Activated CD4-positive, alpha-beta memory T cell treated with anti-CD3 and anti-CD28 coated beads for 36 hours (primary cell): ENCODE measurements at regions of chr13 and their contacts with region 1.

Region 1: GRCh38 chr13:114065141-114065925 is 67.1 kb downstream of the RASA3 start:
- DNase-seq: peak; percentile 90
- H3K4me3 Mint-ChIP-seq: peak overlapping the region; percentile 70
- H3K27ac Mint-ChIP-seq: peak overlapping the region; percentile 96
- H3K4me1 Mint-ChIP-seq: peaks cover 65% of the 10 kb centered on the region
- H3K27me3 Mint-ChIP-seq: no peaks in the 10 kb centered on the region

Region 2: DNA sequence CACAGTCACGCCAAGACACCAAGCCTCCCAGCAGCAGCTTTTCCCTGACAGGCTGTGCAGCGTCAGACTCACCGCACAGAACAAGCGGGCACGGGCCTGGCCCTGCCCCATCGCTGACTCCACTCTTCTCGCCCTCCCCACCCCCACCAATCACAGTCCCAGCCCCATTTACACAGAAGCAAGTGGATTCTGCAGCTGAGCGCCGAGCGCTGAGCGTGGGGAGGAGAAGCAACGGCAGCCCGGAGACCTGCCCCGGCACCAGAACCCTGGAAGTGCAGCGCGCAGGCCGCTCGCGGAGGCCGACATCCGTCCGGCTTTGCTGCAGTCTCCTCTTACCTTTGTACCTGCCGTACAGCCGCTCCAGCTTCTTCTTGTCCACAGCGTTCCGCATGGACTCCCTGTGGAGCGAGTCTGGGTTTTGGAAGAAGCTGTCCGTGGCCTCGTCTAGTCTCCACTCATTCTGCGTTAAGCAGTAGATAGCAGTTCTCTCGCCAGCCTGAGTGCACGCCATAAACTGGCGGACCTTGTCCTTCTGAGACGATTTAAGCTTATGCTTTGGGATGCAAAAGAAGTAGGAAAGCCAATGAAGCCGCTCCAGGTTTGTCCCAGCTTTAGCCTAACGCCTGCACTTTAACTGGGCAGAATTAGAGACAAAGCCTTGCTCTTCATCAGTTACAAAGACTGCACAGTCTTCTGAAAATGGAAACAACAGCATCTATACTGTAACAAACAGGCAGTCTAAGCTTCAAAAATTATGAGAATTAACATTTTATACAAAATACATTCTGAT is 581.6 kb before region 1 on chr13:
- CTCF ChIA-PET with region 1: no interaction called
- POLR2A ChIA-PET with region 1: no interaction called
- intact Hi-C with region 1: no loop called
- DNase-seq: no peak
- H3K4me3 Mint-ChIP-seq: no peak overlapping the region
- H3K27ac Mint-ChIP-seq: no peak overlapping the region
- H3K4me1 Mint-ChIP-seq: peaks cover 15% of the 10 kb centered on the region
- H3K27me3 Mint-ChIP-seq: no peaks in the 10 kb centered on the region

Region 3: DNA sequence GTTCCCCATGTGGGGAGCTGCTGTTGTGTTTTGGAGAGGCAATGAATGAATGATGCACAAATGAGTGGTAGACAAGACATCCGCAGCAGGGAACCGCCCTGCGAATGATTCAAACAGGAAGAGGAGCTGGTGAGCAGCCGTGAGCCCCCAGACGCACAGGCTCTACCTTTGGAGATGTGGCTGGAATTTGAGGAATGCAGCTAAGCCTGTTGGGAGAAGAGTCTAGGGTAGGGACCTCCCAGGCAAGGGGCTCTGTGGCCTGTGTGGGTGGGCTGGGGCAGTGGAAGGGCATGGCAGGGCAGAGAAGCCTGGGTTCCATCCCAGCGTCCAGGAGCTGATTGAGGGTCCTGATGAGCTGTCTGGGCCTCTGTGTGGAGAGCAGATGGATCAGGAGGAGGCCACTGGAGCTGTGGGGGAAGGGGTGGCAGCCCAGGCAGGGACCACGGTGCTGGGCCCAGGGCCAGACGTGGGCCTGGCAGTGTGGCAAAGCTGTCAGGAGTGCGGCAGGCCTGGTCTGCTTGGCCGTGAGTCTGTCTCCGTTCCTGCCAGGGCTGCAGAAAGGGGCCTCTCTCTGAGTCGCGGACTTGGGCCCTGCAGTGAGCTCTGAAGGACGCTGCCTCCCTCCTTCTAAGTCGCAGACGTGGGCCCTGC is 533.1 kb before region 1 on chr13:
- CTCF ChIA-PET with region 1: no interaction called
- POLR2A ChIA-PET with region 1: no interaction called
- intact Hi-C with region 1: no loop called
- DNase-seq: no peak
- H3K4me3 Mint-ChIP-seq: no peak overlapping the region
- H3K27ac Mint-ChIP-seq: no peak overlapping the region
- H3K4me1 Mint-ChIP-seq: no peaks in the 10 kb centered on the region
- H3K27me3 Mint-ChIP-seq: no peaks in the 10 kb centered on the region

Region 4: DNA sequence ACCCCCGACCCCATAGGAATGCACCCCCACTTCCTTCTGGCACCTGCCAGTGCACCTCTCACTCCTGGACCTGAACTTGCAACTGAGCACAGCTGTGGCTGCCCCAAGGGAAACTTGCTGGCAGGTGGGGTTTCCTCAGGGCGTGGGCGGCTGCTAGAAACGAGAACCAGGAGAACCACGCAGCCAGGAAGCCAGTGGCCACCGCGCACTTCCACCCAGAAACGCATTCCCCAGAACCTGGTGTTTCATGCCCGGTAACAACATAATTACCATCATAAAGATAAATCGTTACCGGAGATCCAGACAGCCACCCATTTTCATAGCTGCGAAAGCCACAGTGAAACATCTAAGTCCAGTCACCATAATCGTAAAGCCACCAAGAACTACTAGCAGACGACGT is 16.3 kb before region 1 on chr13:
- CTCF ChIA-PET with region 1: no interaction called
- POLR2A ChIA-PET with region 1: interaction called, 13 read pairs
- intact Hi-C with region 1: loop called (anchors 1 kb)
- DNase-seq: peak; percentile 84
- H3K4me3 Mint-ChIP-seq: peak overlapping the region; percentile 27
- H3K27ac Mint-ChIP-seq: peak overlapping the region; percentile 66
- H3K4me1 Mint-ChIP-seq: peaks cover 65% of the 10 kb centered on the region
- H3K27me3 Mint-ChIP-seq: no peaks in the 10 kb centered on the region

Region 5: GRCh38 chr13:114110091-114110829 is 44.9 kb after region 1 on chr13:
- CTCF ChIA-PET with region 1: interaction called, 6 read pairs
- POLR2A ChIA-PET with region 1: interaction called, 6 read pairs
- intact Hi-C with region 1: loop called (anchors 1 kb)
- DNase-seq: peak; percentile 87
- H3K4me3 Mint-ChIP-seq: peak overlapping the region; percentile 77
- H3K27ac Mint-ChIP-seq: peak overlapping the region; percentile 88
- H3K4me1 Mint-ChIP-seq: peaks cover 78% of the 10 kb centered on the region
- H3K27me3 Mint-ChIP-seq: no peaks in the 10 kb centered on the region

Region 6: GRCh38 chr13:114124921-114125320 is 59.6 kb after region 1 on chr13:
- CTCF ChIA-PET with region 1: interaction called, 4 read pairs
- POLR2A ChIA-PET with region 1: interaction called, 7 read pairs
- intact Hi-C with region 1: loop called (anchors 1 kb)
- DNase-seq: peak; percentile 92
- H3K4me3 Mint-ChIP-seq: peak overlapping the region; percentile 38
- H3K27ac Mint-ChIP-seq: peak overlapping the region; percentile 93
- H3K4me1 Mint-ChIP-seq: peaks cover 87% of the 10 kb centered on the region
- H3K27me3 Mint-ChIP-seq: no peaks in the 10 kb centered on the region

Region 7: DNA sequence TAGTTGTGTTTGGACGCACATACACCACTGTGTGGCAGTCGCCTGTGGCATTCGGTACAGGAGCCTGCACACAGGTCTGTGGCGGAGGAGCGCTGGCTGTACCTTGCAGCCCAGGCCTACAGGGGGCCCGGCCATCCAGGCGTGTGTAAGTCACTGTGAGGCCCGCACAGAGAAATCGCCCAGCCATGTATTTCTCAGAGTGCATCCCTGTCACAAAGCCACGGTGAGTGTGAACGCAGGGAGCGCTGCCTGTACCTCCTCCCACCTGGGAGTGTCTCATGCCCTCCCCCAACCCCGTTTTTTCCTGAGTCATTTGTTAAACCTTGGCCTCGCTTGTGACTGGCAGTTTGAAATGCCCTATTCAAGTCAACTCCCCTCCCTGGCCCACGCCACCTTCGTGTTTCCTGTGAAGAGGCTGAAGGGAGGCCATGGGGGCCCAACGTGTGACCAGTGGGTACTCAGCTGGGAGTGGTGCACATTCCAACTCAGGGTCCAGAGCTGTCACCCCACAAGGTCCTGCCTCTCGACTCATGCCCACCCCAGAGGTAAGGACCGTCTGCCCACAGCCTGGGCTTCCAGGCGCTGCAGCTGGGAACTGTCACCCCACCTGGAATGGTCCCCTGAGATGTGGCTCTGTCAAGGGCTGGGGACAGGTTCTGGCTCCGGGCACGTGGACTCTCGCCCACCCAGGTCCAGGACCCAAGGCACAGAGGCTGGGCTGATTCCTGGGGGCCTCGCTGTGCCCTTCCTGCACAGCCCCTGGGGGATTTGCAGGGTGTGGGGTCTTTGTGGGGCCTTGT is 78.7 kb after region 1 on chr13:
- CTCF ChIA-PET with region 1: interaction called, 3 read pairs
- POLR2A ChIA-PET with region 1: interaction called, 7 read pairs
- intact Hi-C with region 1: loop called (anchors 1 kb)
- DNase-seq: peak; percentile 66
- H3K4me3 Mint-ChIP-seq: no peak overlapping the region
- H3K27ac Mint-ChIP-seq: no peak overlapping the region
- H3K4me1 Mint-ChIP-seq: peaks cover 13% of the 10 kb centered on the region
- H3K27me3 Mint-ChIP-seq: no peaks in the 10 kb centered on the region

Region 8: GRCh38 chr13:114226699-114227323 is 161.5 kb after region 1 on chr13:
- CTCF ChIA-PET with region 1: interaction called, 3 read pairs
- POLR2A ChIA-PET with region 1: interaction called, 3 read pairs
- intact Hi-C with region 1: loop called (anchors 2 kb)
- DNase-seq: peak; percentile 93
- H3K4me3 Mint-ChIP-seq: peak overlapping the region; percentile 6
- H3K27ac Mint-ChIP-seq: peak overlapping the region; percentile 68
- H3K4me1 Mint-ChIP-seq: peaks cover 46% of the 10 kb centered on the region
- H3K27me3 Mint-ChIP-seq: peaks cover 3% of the 10 kb centered on the region